ENCODE measurements at regions of chr9 and their contacts with region 1.

Region 1: GRCh38 chr9:110217656-110218099 is 9.7 kb upstream of the C9orf152 start:
- DNase-seq: no peak
- ATAC-seq: no peak
- H3K4me3 Mint-ChIP-seq: no peak overlapping the region
- H3K27ac Mint-ChIP-seq: no peak overlapping the region
- H3K4me1 Mint-ChIP-seq: no peaks in the 10 kb centered on the region
- H3K27me3 Mint-ChIP-seq: peaks cover 2% of the 10 kb centered on the region

Region 2: DNA sequence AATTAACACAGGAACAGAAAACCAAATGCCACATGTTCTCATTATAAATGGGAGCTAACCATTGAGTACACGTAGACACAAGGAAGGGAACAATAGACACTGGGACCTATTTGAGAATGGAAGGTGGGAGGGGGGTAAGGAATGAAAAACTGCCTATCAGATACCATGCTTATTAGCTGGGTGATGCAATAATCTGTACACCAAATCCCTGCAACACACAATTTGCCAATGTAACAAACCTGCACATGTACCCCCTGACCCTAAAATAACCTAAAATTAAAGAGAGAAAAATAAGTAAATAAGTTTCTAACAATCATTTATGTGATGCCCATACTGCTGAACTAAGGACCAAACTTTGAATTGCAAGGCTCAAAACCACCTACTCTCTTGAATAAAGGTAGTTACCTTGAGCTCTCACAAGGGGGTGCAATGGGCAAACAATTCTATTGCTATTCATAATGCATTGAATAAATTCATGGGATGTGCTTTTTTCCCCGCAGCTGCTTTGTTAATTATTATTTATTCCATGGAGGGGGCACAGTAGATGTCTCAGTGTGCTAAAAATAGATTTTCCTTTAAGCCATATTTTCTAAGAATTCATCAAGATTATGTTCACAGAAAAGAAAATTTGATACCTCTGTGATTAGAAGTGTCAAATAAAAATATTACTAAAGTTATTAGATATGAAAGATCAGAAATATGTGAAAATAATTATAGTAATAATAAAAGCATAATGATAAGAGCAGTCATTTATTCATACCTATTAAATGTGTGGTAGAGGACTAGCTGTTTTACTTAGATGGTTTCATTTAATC is 643.4 kb before region 1 on chr9:
- CTCF ChIA-PET with region 1: interaction called, 3 read pairs
- POLR2A ChIA-PET with region 1: no interaction called
- intact Hi-C with region 1: loop called (anchors 2 to 5 kb)
- DNase-seq: peak; percentile 29
- ATAC-seq: peak; percentile 63
- H3K4me3 Mint-ChIP-seq: no peak overlapping the region
- H3K27ac Mint-ChIP-seq: no peak overlapping the region
- H3K4me1 Mint-ChIP-seq: no peaks in the 10 kb centered on the region
- H3K27me3 Mint-ChIP-seq: peaks cover 2% of the 10 kb centered on the region

Region 3: DNA sequence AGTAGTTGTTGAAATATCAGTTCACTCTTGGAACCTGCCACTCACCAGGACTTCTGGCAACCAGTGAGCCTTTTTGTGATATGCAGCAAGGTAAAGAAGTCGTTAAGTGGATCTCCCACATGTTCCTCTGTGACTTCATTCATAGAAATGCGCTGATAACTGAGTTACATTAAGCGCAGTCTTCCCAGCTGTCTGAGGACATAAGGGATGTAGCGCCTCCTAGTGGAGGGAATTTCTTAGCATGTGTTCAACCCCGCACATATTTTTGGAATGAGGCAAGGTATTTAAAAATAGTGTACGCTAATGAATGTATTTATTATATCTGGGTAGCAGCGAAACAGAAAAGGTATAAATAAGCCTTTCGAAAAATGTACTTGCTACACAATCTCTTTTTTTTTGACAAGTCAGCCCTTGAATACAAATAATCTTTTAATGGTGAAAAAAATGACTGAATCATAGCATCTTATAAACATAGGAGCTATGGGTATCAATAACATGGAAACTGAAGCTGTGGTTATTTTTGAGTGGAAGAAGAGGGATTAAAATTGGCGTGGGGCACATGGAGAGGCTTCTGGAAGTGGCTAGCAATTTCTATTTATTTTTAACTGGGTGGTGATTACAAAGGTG is 399.7 kb before region 1 on chr9:
- CTCF ChIA-PET with region 1: interaction called, 3 read pairs
- POLR2A ChIA-PET with region 1: no interaction called
- intact Hi-C with region 1: loop called in 1 of 2 experiments (anchors 5 kb)
- DNase-seq: peak; percentile 67
- ATAC-seq: peak; percentile 71
- H3K4me3 Mint-ChIP-seq: no peak overlapping the region
- H3K27ac Mint-ChIP-seq: no peak overlapping the region
- H3K4me1 Mint-ChIP-seq: no peaks in the 10 kb centered on the region
- H3K27me3 Mint-ChIP-seq: peaks cover 16% of the 10 kb centered on the region

Region 4: DNA sequence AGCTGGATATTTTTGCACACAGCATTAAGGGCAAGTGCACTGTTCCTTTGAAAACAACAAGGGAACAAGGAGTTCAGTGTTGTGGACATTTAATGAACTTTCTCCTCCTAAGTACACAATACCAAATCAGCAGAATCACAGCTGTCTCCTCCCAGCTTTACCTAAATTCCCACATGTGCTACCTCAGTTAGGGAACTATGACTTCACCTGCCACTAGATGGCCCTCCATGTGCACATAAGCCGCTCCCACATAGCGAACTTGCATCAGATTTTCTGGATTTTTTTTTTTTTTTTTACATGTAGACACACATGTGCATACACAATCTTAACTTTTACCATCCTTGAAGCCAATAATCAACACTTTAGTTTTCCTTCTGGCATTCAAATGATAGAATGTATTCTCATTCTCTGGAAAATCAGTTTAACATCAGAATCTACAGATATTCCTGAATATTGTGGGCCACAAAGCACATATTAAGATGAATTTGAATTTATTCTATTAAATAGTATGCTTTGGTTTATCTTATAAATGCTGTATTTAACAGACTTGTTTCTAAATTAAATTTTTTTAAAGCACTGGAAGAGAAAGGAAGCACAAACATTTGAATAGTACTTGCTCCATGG is 314.1 kb before region 1 on chr9:
- CTCF ChIA-PET with region 1: interaction called, 12 read pairs
- POLR2A ChIA-PET with region 1: no interaction called
- intact Hi-C with region 1: loop called (anchors 1 to 5 kb)
- DNase-seq: peak; percentile 82
- ATAC-seq: peak; percentile 85
- H3K4me3 Mint-ChIP-seq: no peak overlapping the region
- H3K27ac Mint-ChIP-seq: peak overlapping the region; percentile 45
- H3K4me1 Mint-ChIP-seq: peaks cover 5% of the 10 kb centered on the region
- H3K27me3 Mint-ChIP-seq: peaks cover 4% of the 10 kb centered on the region

Region 5: DNA sequence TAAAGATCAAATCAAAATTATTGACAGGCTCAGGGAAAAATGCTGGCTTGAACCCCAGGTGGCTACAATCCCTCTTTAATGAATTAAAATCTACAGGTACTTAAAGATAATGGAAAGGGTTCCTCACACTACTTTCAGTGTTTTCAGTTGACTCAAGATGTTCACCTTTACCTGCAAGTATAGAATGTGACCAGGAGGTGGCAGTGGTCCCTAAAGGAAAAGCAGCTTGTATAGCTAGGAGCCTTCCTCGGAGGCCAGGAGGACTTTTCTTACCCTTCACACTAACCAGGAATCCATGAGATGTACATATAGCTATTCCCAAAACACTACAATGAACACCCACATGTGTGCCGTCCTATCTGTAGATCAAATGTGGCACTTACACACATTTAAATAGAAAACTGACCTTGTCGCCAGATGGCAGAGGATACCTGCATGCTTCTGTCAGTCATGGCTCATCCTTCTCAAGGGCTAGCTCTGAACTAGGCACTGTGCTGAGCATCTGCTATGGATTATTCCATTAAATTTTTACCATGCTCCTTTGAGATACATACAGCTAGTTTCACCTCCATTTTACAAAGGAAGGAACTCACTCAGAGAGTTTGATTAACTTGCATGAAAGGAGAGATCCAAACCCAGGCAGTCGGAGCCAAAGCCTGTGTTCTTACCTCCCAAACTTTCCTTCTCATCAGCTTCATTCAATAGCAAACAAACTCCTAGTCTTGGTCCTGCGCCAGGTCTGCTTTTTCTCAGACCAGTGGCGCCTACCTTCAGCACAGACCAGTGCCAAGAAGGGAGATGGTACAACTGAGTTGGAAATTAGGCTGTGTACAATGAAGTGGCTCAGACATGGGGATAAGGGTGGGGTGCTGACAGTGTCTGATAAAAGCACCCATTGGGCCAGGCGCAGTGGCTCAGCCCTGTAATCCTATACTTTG is 34.2 kb before region 1 on chr9:
- CTCF ChIA-PET with region 1: interaction called, 24 read pairs
- POLR2A ChIA-PET with region 1: no interaction called
- intact Hi-C with region 1: loop called (anchors 1 kb)
- DNase-seq: peak; percentile 77
- ATAC-seq: peak; percentile 90
- H3K4me3 Mint-ChIP-seq: no peak overlapping the region
- H3K27ac Mint-ChIP-seq: no peak overlapping the region
- H3K4me1 Mint-ChIP-seq: peaks cover 2% of the 10 kb centered on the region
- H3K27me3 Mint-ChIP-seq: no peaks in the 10 kb centered on the region

Region 6: DNA sequence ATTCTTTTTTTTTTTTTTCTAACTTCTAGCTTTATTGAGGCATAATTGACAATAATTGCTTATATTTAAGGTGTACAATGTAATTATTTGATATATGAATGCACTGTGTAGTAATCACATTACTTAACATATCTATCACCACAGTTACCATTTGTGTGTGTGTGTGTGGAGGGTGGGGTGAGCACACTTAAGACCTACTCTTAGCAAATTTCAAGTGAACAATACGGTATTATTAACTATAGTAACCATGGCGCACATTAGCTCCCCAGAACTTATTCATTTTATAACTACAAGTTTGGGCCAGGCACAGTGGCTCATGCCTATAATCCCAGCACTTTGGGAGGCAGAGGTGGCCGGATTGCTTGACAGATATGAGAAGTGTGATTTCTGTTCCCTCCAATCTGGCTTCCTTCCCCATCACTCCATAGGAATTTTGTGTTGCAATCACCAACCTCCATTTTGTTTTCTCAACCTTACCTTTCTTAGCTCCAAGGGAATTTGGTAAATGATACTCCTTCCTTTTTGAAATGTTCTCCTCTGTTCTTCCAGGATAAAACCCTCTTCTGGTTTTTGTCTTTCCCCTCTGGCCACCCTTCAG is 23.7 kb after region 1 on chr9:
- CTCF ChIA-PET with region 1: no interaction called
- POLR2A ChIA-PET with region 1: no interaction called
- intact Hi-C with region 1: no loop called
- DNase-seq: no peak
- ATAC-seq: no peak
- H3K4me3 Mint-ChIP-seq: no peak overlapping the region
- H3K27ac Mint-ChIP-seq: no peak overlapping the region
- H3K4me1 Mint-ChIP-seq: no peaks in the 10 kb centered on the region
- H3K27me3 Mint-ChIP-seq: no peaks in the 10 kb centered on the region